ENCODE measurements at regions of chr14 and their contacts with region 1.

Region 1: GRCh38 chr14:39432179-39432618 is at the start of gene FBXO33:
- DNase-seq: peak; percentile 98
- ATAC-seq: peak; percentile 87
- H3K4me3 ChIP-seq: peak within 1 kb of the TSS; percentile 88 to 98 (median 94)
- H3K27ac ChIP-seq: peak within 1 kb of the TSS; percentile 98
- H3K4me1 ChIP-seq: peaks cover 37% of the 10 kb centered on the region
- H3K27me3 ChIP-seq: no peaks in the 10 kb centered on the region; a peak in 1 of 5 replicates
- CTCF ChIP-seq: no peak
- EP300 ChIP-seq: peak in 1 of 2 experiments; percentile 77; a peak in 2 of 4 replicates
- POLR2A ChIP-seq: no peak
- RAD21 ChIP-seq: peak; percentile 27; the same call in 1 of the 2 replicates
- total RNA-seq, gene FBXO33: 15.5 and 23.3 TPM in 2 replicates

Region 2: DNA sequence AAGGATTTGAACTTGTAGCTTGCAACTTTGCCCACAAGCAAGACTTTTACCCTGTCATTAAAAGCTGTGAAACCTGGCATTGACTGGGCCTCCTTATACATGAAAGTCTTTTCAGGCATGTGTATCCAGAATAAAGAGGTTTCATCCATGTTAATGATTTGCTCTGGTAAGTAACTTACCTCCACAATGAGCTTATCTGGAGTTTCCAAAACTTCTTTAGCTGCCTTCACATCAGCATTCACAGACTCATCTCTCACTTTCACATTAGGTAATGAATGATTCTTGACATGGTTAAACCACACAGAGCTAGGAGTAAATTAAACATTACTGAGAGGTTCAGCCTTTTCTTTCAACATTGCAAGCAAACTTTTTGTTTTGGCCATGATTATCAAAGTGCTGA is 941.9 kb before region 1 on chr14:
- CTCF ChIA-PET with region 1: no interaction called
- POLR2A ChIA-PET with region 1: no interaction called
- in situ Hi-C with region 1: no loop called
- intact Hi-C with region 1: no loop called
- DNase-seq: no peak
- ATAC-seq: no peak
- H3K4me3 ChIP-seq: no peak overlapping the region
- H3K27ac ChIP-seq: no peak overlapping the region
- H3K4me1 ChIP-seq: no peaks in the 10 kb centered on the region
- H3K27me3 ChIP-seq: no peaks in the 10 kb centered on the region
- CTCF ChIP-seq: no peak
- EP300 ChIP-seq: no peak
- POLR2A ChIP-seq: no peak
- RAD21 ChIP-seq: no peak

Region 3: DNA sequence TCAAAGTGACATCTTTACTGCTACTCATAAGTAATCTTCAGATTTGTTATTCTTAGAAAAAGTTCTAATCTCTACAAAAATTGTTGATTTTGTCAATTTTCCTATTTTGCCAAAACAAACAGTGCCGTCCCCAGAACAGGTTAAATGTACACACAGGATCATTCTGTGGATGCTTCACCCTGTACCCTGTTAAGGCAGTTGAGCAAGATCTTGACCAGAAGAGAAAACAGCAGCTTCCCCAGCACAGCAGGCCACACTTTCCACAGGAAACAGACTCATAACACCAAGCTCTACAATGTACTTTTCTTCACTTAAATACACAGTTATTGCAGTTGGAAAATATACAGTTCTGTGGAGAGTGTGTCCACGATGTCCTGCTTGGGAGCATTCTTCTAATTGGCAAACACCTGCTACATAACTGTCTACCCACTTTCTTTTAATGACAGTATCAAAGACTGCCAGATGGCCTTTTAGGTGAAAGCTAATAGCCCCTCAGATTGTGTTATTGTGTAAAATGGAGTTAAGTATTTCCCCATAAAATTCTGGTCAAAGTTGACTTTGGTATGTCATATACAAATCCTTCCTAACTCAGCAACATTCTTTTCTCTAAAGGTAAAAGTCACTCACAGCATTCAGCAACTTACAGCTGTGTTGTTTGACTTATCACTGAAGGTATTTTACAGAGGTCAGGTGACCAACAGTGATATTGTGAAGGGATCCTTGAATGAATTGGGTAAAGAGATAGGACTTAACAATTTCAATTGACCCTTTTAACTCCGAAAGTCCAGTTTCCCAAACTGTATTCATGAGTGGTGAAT is 406.2 kb before region 1 on chr14:
- CTCF ChIA-PET with region 1: no interaction called
- POLR2A ChIA-PET with region 1: interaction called, 6 read pairs
- in situ Hi-C with region 1: no loop called
- intact Hi-C with region 1: loop called (anchors 2 kb)
- DNase-seq: peak; percentile 87
- ATAC-seq: peak; percentile 74
- H3K4me3 ChIP-seq: peak overlapping the region in 1 of 3 experiments; percentile 8; a peak in 1 of 6 replicates
- H3K27ac ChIP-seq: peak overlapping the region; percentile 74
- H3K4me1 ChIP-seq: peaks cover 48% of the 10 kb centered on the region
- H3K27me3 ChIP-seq: no peaks in the 10 kb centered on the region
- CTCF ChIP-seq: 0 out of 2 replicates have a peak, but pooled peaks have one; percentile 8
- EP300 ChIP-seq: peak in 1 of 2 experiments; percentile 86; a peak in 2 of 4 replicates
- POLR2A ChIP-seq: no peak
- RAD21 ChIP-seq: peak; percentile 32; the same call in 1 of the 2 replicates

Region 4: DNA sequence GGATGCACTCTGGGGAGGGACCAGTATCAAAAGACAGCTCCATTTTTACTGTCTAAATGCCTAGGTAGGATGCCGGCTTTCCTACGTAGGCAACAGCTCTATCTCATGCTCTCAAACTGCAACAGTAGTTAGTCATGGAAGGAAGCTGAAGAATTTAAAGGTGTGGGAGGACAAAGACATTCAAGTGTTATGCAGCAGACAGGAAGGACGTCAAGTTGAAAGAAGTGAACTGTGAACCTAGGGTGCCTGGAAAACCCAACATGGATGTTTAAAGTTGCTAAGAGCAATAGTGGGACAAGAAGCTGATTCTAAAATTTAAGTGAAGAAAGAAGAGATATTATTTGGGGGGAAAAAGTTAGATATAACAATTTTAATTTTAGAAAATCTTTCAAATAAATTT is 335.0 kb before region 1 on chr14:
- CTCF ChIA-PET with region 1: no interaction called
- POLR2A ChIA-PET with region 1: interaction called, 68 read pairs
- in situ Hi-C with region 1: loop called (anchors 5 kb)
- intact Hi-C with region 1: no loop called
- DNase-seq: peak; percentile 90
- ATAC-seq: peak; percentile 70
- H3K4me3 ChIP-seq: 0 out of 6 replicates have a peak overlapping the region, but pooled peaks of 1 of the 3 experiments have one; percentile 2
- H3K27ac ChIP-seq: peak overlapping the region; percentile 36
- H3K4me1 ChIP-seq: peaks cover 76% of the 10 kb centered on the region
- H3K27me3 ChIP-seq: no peaks in the 10 kb centered on the region; a peak in 1 of 5 replicates
- CTCF ChIP-seq: no peak
- EP300 ChIP-seq: peak in 1 of 2 experiments; percentile 20; a peak in 2 of 4 replicates
- POLR2A ChIP-seq: peak in 1 of 2 experiments; percentile 33; a peak in 1 of 4 replicates
- RAD21 ChIP-seq: no peak

Region 5: DNA sequence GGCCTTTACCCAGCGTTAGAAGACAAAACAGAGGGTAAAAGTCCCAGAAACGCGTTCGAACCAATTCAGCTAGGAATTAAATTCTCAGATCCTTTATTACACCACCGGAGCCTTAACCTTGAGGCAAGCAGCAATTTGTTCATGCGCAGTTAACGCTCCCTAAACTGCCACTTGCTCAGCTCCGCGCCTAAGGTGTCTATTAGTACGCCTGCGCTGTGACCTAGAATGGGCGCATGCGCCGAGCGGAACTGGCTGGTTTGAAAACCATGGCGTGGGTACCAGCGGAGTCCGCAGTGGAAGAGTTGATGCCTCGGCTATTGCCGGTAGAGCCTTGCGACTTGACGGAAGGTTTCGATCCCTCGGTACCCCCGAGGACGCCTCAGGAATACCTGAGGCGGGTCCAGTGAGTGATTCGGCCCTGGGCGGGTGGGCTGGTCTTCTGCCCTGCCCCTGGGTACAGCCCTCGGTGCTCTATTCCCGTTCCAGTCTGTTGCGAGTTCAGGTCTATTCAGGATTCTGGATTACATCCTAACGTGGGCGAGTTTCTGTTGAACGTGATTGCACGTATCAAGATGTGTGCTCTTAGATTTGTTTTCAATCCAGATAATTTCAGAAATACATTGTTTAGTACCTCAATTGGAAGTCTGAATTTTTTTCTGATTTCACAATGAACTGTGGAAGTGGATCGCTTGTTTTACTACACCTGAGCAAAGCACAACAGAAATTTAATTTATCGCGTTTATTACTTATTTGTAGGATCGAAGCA is 317.9 kb before region 1 on chr14 and contains the start of gene GEMIN2:
- CTCF ChIA-PET with region 1: no interaction called
- POLR2A ChIA-PET with region 1: interaction called, 16 read pairs
- in situ Hi-C with region 1: no loop called
- intact Hi-C with region 1: no loop called
- DNase-seq: peak; percentile 97
- ATAC-seq: peak; percentile 99
- H3K4me3 ChIP-seq: peak within 1 kb of the TSS; percentile 71 to 90 (median 76)
- H3K27ac ChIP-seq: peak within 1 kb of the TSS; percentile 40
- H3K4me1 ChIP-seq: peaks cover 33% of the 10 kb centered on the region
- H3K27me3 ChIP-seq: no peaks in the 10 kb centered on the region; a peak in 1 of 5 replicates
- CTCF ChIP-seq: peak; percentile 26
- EP300 ChIP-seq: peak in 1 of 2 experiments; percentile 13; a peak in 2 of 4 replicates
- POLR2A ChIP-seq: peak; percentile 89 to 99; a peak in 3 of 4 replicates
- RAD21 ChIP-seq: peak; percentile 29; the same call in 1 of the 2 replicates
- total RNA-seq, gene GEMIN2: 110 and 160 TPM in 2 replicates

Region 6: GRCh38 chr14:39174560-39175444 is 257.4 kb before region 1 on chr14 and contains the start of gene PNN:
- CTCF ChIA-PET with region 1: no interaction called
- POLR2A ChIA-PET with region 1: interaction called, 76 read pairs
- in situ Hi-C with region 1: no loop called
- intact Hi-C with region 1: loop called (anchors 2 kb)
- DNase-seq: peak; percentile 100
- ATAC-seq: peak; percentile 92
- H3K4me3 ChIP-seq: peak within 1 kb of the TSS; percentile 80 to 96 (median 80)
- H3K27ac ChIP-seq: peak within 1 kb of the TSS; percentile 88
- H3K4me1 ChIP-seq: peaks cover 52% of the 10 kb centered on the region
- H3K27me3 ChIP-seq: peaks cover 0 to 2% of the 10 kb centered on the region in 2 experiments; a peak in 1 of 5 replicates
- CTCF ChIP-seq: 0 out of 2 replicates have a peak, but pooled peaks have one; percentile 2
- EP300 ChIP-seq: peak; percentile 69 to 97
- POLR2A ChIP-seq: peak in 1 of 2 experiments; percentile 98; a peak in 2 of 4 replicates
- RAD21 ChIP-seq: peak; percentile 66
- total RNA-seq, gene PNN: 110 and 214 TPM in 2 replicates

Region 7: GRCh38 chr14:39447175-39447661 is 15.0 kb after region 1 on chr14:
- CTCF ChIA-PET with region 1: no interaction called
- POLR2A ChIA-PET with region 1: interaction called, 30 read pairs
- in situ Hi-C with region 1: no loop called
- intact Hi-C with region 1: loop called (anchors 1 kb)
- DNase-seq: no peak
- ATAC-seq: peak; percentile 70
- H3K4me3 ChIP-seq: no peak overlapping the region
- H3K27ac ChIP-seq: no peak overlapping the region
- H3K4me1 ChIP-seq: peaks cover 23% of the 10 kb centered on the region
- H3K27me3 ChIP-seq: no peaks in the 10 kb centered on the region
- CTCF ChIP-seq: no peak
- EP300 ChIP-seq: no peak; a peak in 1 of 4 replicates
- POLR2A ChIP-seq: no peak
- RAD21 ChIP-seq: no peak

Region 8: GRCh38 chr14:39469094-39469710 is 37.0 kb after region 1 on chr14:
- CTCF ChIA-PET with region 1: no interaction called
- POLR2A ChIA-PET with region 1: interaction called, 4 read pairs
- in situ Hi-C with region 1: no loop called
- intact Hi-C with region 1: loop called (anchors 1 kb)
- DNase-seq: peak; percentile 74
- ATAC-seq: peak; percentile 93
- H3K4me3 ChIP-seq: peak overlapping the region in 1 of 3 experiments; percentile 14; a peak in 1 of 6 replicates
- H3K27ac ChIP-seq: no peak overlapping the region
- H3K4me1 ChIP-seq: peaks cover 10% of the 10 kb centered on the region
- H3K27me3 ChIP-seq: no peaks in the 10 kb centered on the region
- CTCF ChIP-seq: peak; percentile 94
- EP300 ChIP-seq: no peak
- POLR2A ChIP-seq: no peak
- RAD21 ChIP-seq: peak; percentile 78